Activated naive CD4-positive, alpha-beta T cell treated with anti-CD3 and anti-CD28 coated beads for 36 hours (primary cell): ENCODE measurements at regions of chr10 and their contacts with region 1.

Region 1: GRCh38 chr10:102641880-102642735 is 2.2 kb upstream of the TRIM8 start:
- DNase-seq: peak; percentile 99
- H3K4me3 Mint-ChIP-seq: peak overlapping the region; percentile 83
- H3K27ac Mint-ChIP-seq: peak overlapping the region; percentile 88
- H3K4me1 Mint-ChIP-seq: peaks cover 18% of the 10 kb centered on the region
- H3K27me3 Mint-ChIP-seq: no peaks in the 10 kb centered on the region

Region 2: GRCh38 chr10:101353692-101354327 is 1288.3 kb before region 1 on chr10 and contains the start of gene BTRC:
- CTCF ChIA-PET with region 1: no interaction called
- intact Hi-C with region 1: loop called (anchors 10 kb)
- DNase-seq: peak; percentile 98
- H3K4me3 Mint-ChIP-seq: peak within 1 kb of the TSS; percentile 92
- H3K27ac Mint-ChIP-seq: peak within 1 kb of the TSS; percentile 95
- H3K4me1 Mint-ChIP-seq: peaks cover 30% of the 10 kb centered on the region
- H3K27me3 Mint-ChIP-seq: peaks cover 2% of the 10 kb centered on the region
- total RNA-seq, gene BTRC: 10.9 to 12.7 TPM

Region 3: GRCh38 chr10:102151774-102152544 is 490.1 kb before region 1 on chr10 and contains the start of gene NOLC1:
- CTCF ChIA-PET with region 1: no interaction called
- intact Hi-C with region 1: loop called (anchors 1 kb)
- DNase-seq: peak; percentile 100
- H3K4me3 Mint-ChIP-seq: peak within 1 kb of the TSS; percentile 98
- H3K27ac Mint-ChIP-seq: peak within 1 kb of the TSS; percentile 96
- H3K4me1 Mint-ChIP-seq: peaks cover 53% of the 10 kb centered on the region
- H3K27me3 Mint-ChIP-seq: no peaks in the 10 kb centered on the region
- total RNA-seq, gene NOLC1: 182 to 194 TPM

Region 4: DNA sequence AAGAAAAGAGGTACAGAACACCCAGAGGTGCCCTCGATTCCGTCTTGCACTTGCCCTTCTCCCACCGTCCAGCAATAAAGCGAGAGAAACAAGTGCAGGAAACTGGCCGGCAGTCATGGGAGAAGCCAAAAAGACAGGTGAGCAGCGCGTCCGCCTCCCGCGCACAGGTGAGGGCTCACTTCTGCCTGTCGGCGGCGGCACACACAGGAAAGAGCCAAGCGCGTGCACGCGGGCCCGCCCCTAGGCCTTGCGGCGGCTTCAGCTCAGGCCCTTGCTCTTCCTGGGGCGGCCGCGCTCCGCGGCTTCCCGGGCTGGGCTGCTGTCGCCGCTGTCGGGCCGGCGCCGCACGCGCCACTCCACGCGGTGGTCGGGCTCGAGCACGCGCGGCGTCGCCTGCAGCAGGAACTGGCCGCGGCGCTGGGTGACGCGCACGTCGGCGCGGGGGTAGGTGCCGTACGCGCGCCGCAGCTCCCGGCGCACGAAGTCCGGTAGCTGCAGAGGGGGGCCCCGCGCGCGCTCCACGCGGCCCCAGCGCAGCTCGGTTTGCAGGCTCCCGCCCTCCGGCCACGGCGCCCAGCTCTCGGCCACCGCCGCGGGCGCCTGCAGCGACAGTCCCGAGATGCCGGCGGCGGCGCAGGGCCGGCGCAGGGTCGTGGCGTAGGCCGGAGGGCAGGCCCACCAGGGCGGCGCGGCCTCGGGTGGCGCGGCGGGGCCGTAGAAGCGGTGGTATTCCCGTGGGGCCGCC is 191.7 kb before region 1 on chr10:
- CTCF ChIA-PET with region 1: no interaction called
- intact Hi-C with region 1: loop called (anchors 5 kb)
- DNase-seq: peak; percentile 82
- H3K4me3 Mint-ChIP-seq: peak overlapping the region; percentile 96
- H3K27ac Mint-ChIP-seq: peak overlapping the region; percentile 96
- H3K4me1 Mint-ChIP-seq: peaks cover 27% of the 10 kb centered on the region
- H3K27me3 Mint-ChIP-seq: no peaks in the 10 kb centered on the region

Region 5: DNA sequence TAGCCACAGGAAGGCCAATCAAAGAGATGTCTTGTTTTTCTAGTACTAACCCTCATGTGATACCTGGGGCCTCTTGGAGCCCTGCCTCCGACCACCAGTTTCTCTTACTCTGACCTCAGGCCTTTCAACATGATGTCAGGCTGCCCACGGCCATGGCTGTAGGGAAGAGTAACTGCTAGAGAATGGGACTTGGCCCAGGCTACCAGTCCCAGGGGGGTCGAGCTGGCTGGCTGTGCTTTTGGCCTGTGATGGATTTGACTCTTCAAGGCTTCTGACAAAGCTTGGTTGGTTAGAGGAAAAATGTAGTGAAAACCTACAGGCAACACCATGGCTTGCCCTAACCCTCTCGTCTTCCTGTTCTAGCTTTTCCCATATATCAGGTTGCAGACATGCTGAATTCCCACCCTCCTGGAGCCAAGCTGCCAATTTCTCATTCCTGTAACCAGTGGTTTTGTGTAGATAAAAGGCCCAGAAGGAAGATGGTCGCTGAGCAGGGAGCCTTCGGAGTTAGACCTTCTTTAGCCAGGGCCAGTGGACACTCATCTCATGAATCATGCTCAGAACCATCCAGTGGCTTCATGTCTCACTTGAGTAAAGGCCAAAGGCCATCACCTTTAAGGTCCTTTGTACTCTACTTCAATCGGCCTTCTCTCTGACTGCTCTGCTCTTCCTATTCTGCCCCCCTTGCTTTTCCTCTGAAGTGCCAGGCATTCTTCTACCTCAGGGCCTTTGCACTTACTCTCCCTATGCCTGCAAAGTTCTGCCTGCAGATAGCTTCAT is 118.7 kb before region 1 on chr10:
- CTCF ChIA-PET with region 1: no interaction called
- intact Hi-C with region 1: no loop called
- DNase-seq: no peak
- H3K4me3 Mint-ChIP-seq: no peak overlapping the region
- H3K27ac Mint-ChIP-seq: no peak overlapping the region
- H3K4me1 Mint-ChIP-seq: peaks cover 3% of the 10 kb centered on the region
- H3K27me3 Mint-ChIP-seq: no peaks in the 10 kb centered on the region

Region 6: GRCh38 chr10:102678842-102679289 is 36.8 kb after region 1 on chr10:
- CTCF ChIA-PET with region 1: interaction called, 6 read pairs
- intact Hi-C with region 1: loop called (anchors 1 kb)
- DNase-seq: no peak
- H3K4me3 Mint-ChIP-seq: no peak overlapping the region
- H3K27ac Mint-ChIP-seq: no peak overlapping the region
- H3K4me1 Mint-ChIP-seq: peaks cover 41% of the 10 kb centered on the region
- H3K27me3 Mint-ChIP-seq: no peaks in the 10 kb centered on the region

Region 7: GRCh38 chr10:102704915-102705314 is 62.8 kb after region 1 on chr10:
- CTCF ChIA-PET with region 1: no interaction called
- intact Hi-C with region 1: no loop called
- DNase-seq: no peak
- H3K4me3 Mint-ChIP-seq: no peak overlapping the region
- H3K27ac Mint-ChIP-seq: no peak overlapping the region
- H3K4me1 Mint-ChIP-seq: peaks cover 2% of the 10 kb centered on the region
- H3K27me3 Mint-ChIP-seq: no peaks in the 10 kb centered on the region

Region 8: DNA sequence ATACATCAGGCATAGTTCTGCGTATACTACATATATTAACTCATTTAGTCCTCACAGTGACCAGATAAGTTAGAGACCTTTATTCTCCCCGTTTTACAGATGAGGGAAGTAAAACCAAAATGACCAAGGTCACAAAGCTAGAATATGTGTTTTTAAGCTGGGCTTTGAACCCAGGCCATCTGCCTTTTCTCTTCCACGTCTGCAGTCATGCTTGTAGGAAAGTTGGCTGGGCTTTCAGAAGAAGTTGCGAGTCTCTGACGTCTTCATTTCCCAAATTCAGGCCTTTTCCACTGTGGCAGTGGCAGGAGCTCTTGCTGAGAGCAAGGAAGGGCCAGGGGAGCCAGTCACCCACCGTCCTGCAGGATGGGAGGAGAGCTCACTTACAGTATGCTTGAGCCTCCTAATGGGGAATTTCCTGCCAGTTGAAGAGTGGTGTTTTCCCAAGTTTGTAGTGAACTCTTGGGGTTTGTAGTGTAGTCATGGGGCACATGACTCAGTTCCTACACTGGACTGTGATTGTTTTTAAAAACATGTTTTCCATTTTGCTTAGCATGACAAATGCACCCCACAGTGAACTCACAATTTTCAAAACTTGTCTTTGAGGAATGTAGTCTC is 160.9 kb after region 1 on chr10:
- CTCF ChIA-PET with region 1: no interaction called
- intact Hi-C with region 1: loop called (anchors 2 kb)
- DNase-seq: peak; percentile 66
- H3K4me3 Mint-ChIP-seq: no peak overlapping the region
- H3K27ac Mint-ChIP-seq: peak overlapping the region; percentile 93
- H3K4me1 Mint-ChIP-seq: peaks cover 35% of the 10 kb centered on the region
- H3K27me3 Mint-ChIP-seq: no peaks in the 10 kb centered on the region

Region 9: GRCh38 chr10:102975483-102976379 is 333.6 kb after region 1 on chr10:
- CTCF ChIA-PET with region 1: no interaction called
- intact Hi-C with region 1: no loop called
- DNase-seq: no peak
- H3K4me3 Mint-ChIP-seq: no peak overlapping the region
- H3K27ac Mint-ChIP-seq: no peak overlapping the region
- H3K4me1 Mint-ChIP-seq: peaks cover 2% of the 10 kb centered on the region
- H3K27me3 Mint-ChIP-seq: no peaks in the 10 kb centered on the region